MCF 10A (cell line): ENCODE measurements at regions of chr2 and their contacts with region 1.

Region 1: GRCh38 chr2:195656859-195657633 is at the start of gene SLC39A10:
- DNase-seq: peak; percentile 98
- H3K4me3 Mint-ChIP-seq: peak within 1 kb of the TSS; percentile 81
- H3K27ac Mint-ChIP-seq: peak within 1 kb of the TSS; percentile 93
- H3K4me1 Mint-ChIP-seq: peaks cover 7% of the 10 kb centered on the region
- H3K27me3 Mint-ChIP-seq: no peaks in the 10 kb centered on the region
- CTCF ChIP-seq: no peak
- total RNA-seq, gene SLC39A10: 47.8 and 59.8 TPM in 2 replicates

Region 2: DNA sequence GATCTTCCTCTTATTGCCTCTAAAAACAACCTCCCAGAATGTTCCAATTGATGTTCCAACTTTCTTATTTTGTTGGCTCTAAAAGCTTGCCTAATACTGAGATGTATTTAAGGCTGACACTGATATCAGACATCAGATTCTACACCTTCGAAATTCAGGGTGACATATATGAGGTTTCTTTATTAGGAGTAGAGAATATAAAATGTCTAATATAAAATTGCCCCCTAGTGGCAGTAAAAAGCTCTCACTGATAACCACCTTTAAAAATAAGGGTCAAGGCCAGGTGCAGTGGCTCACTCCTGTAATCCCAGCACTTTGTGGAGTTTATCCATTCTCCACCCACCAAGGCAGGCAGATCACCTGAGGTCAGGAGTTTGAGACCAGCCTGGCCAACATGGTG is 789.7 kb before region 1 on chr2:
- CTCF ChIA-PET with region 1: no interaction called
- POLR2A ChIA-PET with region 1: no interaction called
- intact Hi-C with region 1: loop called (anchors 5 kb)
- DNase-seq: peak; percentile 45
- H3K4me3 Mint-ChIP-seq: no peak overlapping the region
- H3K27ac Mint-ChIP-seq: no peak overlapping the region
- H3K4me1 Mint-ChIP-seq: peaks cover 9% of the 10 kb centered on the region
- H3K27me3 Mint-ChIP-seq: no peaks in the 10 kb centered on the region
- CTCF ChIP-seq: peak; percentile 43

Region 3: DNA sequence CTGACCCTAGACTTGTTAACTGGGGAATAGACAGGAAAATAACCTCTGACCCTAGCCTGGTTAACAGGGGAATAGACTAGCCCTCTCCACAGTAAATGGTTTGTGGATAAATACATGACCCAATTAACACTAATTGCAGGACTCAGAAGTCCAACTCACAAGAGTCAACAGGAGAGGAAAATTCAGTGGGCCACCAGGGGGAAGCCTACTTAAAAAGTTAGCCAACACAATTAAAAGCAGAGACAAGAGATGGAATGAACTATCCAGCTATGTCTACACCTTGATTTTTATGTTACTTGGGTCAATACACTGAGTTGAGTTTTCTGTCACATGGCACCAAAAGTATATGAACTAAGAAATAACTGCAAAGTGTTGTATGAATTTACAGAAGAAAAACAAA is 158.9 kb before region 1 on chr2:
- CTCF ChIA-PET with region 1: interaction called, 13 read pairs
- POLR2A ChIA-PET with region 1: interaction called, 24 read pairs
- intact Hi-C with region 1: loop called (anchors 1 kb)
- DNase-seq: peak; percentile 53
- H3K4me3 Mint-ChIP-seq: no peak overlapping the region
- H3K27ac Mint-ChIP-seq: no peak overlapping the region
- H3K4me1 Mint-ChIP-seq: peaks cover 8% of the 10 kb centered on the region
- H3K27me3 Mint-ChIP-seq: no peaks in the 10 kb centered on the region
- CTCF ChIP-seq: peak; percentile 23

Region 4: DNA sequence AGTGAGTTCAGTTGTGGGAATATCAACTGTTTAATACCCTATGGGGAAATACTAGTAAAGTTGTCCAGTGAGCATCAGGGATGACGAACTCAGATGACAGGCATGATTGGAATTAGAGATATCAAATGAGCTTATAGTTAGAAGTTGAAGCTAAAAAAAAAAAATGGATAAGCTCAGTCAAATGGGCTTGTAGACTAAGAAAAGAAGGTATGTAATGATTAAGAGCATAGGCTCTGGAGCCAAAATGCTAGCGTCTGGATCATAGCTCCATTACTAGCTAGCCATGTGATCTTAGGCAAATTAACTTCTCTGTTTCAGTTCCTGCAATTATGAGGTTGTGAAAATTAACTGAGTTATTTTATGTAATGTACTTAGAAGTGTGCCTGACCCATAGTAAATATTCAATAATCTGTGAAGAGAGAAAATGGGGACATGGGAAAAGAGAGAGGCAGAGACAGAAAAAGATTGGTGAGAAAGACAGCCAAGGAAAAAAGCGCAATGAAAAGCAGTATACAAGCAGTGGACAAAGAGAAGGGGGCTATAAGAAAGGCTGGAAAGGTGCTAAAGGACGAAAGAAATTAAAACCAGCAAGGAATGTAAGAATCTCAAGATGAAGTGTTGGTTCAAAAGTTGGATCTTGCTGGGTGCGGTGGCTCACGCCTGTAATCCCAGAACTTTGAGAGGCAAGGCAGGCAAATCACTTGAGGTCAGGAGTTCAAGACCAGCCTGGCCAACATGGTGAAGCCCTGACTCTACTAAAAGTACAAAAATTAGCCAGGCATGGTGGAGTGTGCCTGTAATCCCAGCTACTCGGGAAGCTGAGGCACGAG is 95.6 kb before region 1 on chr2:
- CTCF ChIA-PET with region 1: interaction called, 5 read pairs
- POLR2A ChIA-PET with region 1: interaction called, 23 read pairs
- intact Hi-C with region 1: loop called (anchors 1 kb)
- DNase-seq: peak; percentile 46
- H3K4me3 Mint-ChIP-seq: no peak overlapping the region
- H3K27ac Mint-ChIP-seq: peak overlapping the region; percentile 87
- H3K4me1 Mint-ChIP-seq: peaks cover 24% of the 10 kb centered on the region
- H3K27me3 Mint-ChIP-seq: no peaks in the 10 kb centered on the region
- CTCF ChIP-seq: no peak

Region 5: GRCh38 chr2:195671563-195671962 is 14.5 kb after region 1 on chr2:
- CTCF ChIA-PET with region 1: interaction called, 15 read pairs
- POLR2A ChIA-PET with region 1: interaction called, 9 read pairs
- intact Hi-C with region 1: no loop called
- DNase-seq: no peak
- H3K4me3 Mint-ChIP-seq: no peak overlapping the region
- H3K27ac Mint-ChIP-seq: no peak overlapping the region
- H3K4me1 Mint-ChIP-seq: peaks cover 10% of the 10 kb centered on the region
- H3K27me3 Mint-ChIP-seq: no peaks in the 10 kb centered on the region
- CTCF ChIP-seq: no peak